Caco-2 (cell line): ENCODE measurements at regions of chr19 and their contacts with region 1.

Region 1: DNA sequence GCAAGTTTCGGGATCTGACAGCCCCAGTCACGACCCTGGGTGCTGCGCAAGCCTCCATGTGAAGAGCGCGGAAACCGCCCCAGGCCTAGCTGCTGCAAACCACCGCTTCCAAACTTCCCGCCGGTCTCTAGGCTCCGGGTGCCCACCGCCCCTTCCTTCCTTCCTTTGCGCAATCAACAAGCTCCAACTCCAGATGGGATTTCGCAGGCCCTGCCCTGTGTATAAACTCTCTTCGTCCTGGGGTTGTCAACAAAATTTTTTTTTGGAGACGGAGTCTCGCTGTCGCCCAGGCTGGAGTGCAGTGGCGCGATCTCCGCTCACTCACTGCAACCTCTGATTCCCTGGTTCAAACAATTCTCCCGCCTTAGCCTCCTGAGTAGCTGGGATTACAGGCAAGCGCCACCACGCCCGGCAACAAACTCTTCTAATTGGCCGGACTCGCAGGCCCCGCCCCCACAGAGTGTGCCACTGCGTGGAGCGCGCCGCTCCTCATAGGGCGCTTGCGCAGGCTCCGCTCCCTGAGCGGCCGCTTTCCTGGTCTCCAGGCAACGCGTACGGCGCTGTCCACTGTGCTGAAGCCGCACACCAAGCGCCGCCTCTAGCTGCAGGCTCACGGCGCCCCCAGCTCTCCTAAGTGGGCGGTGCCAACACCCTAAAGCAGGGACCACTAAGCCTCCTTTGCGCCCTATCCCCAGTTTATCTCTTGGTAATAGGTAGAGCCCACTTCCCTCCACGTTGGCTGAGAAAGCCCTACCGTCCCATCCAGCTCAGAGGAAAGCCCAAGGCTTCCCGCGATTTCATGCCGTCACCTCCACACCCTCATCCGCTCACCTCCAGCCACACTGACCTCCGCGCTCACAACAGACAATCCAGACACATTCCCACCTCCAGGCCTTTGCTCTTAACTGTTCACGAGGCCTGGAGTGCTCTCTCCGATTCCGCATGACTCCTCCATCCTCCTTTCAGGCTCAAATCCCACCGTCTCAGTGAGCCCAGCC is 5.5 kb upstream of the QTRT1 start:
- DNase-seq: peak; percentile 95
- H3K4me3 ChIP-seq: peak overlapping the region; percentile 19
- H3K4me3 Mint-ChIP-seq: peak overlapping the region; percentile 64
- H3K27ac Mint-ChIP-seq: peak overlapping the region; percentile 49
- H3K4me1 ChIP-seq: peaks cover 6% of the 10 kb centered on the region; the same call in 1 of the 2 replicates
- H3K4me1 Mint-ChIP-seq: peaks cover 6% of the 10 kb centered on the region
- H3K27me3 ChIP-seq: no peaks in the 10 kb centered on the region
- H3K27me3 Mint-ChIP-seq: no peaks in the 10 kb centered on the region
- CTCF ChIP-seq: no peak

Region 2: GRCh38 chr19:10478903-10479384 is 216.8 kb before region 1 on chr19:
- CTCF ChIA-PET with region 1: interaction called, 8 read pairs
- POLR2A ChIA-PET with region 1: no interaction called
- intact Hi-C with region 1: loop called (anchors 5 kb)
- DNase-seq: peak; percentile 93 to 95
- H3K4me3 ChIP-seq: peak overlapping the region; percentile 32
- H3K4me3 Mint-ChIP-seq: peak overlapping the region; percentile 84
- H3K27ac Mint-ChIP-seq: peak overlapping the region; percentile 73
- H3K4me1 ChIP-seq: peaks cover 5% of the 10 kb centered on the region; the same call in 1 of the 2 replicates
- H3K4me1 Mint-ChIP-seq: no peaks in the 10 kb centered on the region
- H3K27me3 ChIP-seq: no peaks in the 10 kb centered on the region
- H3K27me3 Mint-ChIP-seq: no peaks in the 10 kb centered on the region
- CTCF ChIP-seq: peak; percentile 75 to 85

Region 3: GRCh38 chr19:10580979-10581631 is 114.6 kb before region 1 on chr19:
- CTCF ChIA-PET with region 1: interaction called, 9 read pairs
- POLR2A ChIA-PET with region 1: interaction called, 3 read pairs
- intact Hi-C with region 1: loop called (anchors 1 kb)
- DNase-seq: peak; percentile 81 to 85
- H3K4me3 ChIP-seq: no peak overlapping the region
- H3K4me3 Mint-ChIP-seq: no peak overlapping the region
- H3K27ac Mint-ChIP-seq: peak overlapping the region; percentile 57
- H3K4me1 ChIP-seq: peaks cover 6% of the 10 kb centered on the region
- H3K4me1 Mint-ChIP-seq: peaks cover 6% of the 10 kb centered on the region
- H3K27me3 ChIP-seq: no peaks in the 10 kb centered on the region
- H3K27me3 Mint-ChIP-seq: no peaks in the 10 kb centered on the region
- CTCF ChIP-seq: peak; percentile 95 to 98

Region 4: DNA sequence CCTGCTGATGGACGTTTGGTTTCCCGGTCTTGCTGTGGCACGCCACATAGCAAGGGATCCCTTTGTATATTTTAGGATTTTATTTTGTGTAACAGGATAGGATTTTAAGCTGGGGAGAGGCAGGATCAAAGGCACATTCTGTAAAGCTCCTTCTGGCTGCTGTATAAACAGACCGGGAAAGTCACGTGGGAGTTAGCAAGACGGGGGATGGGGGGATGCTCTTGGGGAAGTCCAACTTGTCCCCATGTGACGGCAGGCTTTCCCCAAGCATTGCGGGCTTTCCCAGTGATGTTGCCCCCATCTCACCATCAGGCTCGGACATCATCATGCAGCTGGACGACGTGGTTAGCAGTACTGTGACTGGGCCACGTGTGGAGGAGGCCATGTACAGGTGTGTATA is 11.3 kb after region 1 on chr19:
- CTCF ChIA-PET with region 1: no interaction called
- POLR2A ChIA-PET with region 1: no interaction called
- intact Hi-C with region 1: no loop called
- DNase-seq: peak; percentile 53 to 61
- H3K4me3 ChIP-seq: no peak overlapping the region
- H3K4me3 Mint-ChIP-seq: no peak overlapping the region
- H3K27ac Mint-ChIP-seq: peak overlapping the region; percentile 63
- H3K4me1 ChIP-seq: peaks cover 9% of the 10 kb centered on the region; the same call in 1 of the 2 replicates
- H3K4me1 Mint-ChIP-seq: no peaks in the 10 kb centered on the region
- H3K27me3 ChIP-seq: no peaks in the 10 kb centered on the region
- H3K27me3 Mint-ChIP-seq: no peaks in the 10 kb centered on the region
- CTCF ChIP-seq: no peak